Heart left ventricle (tissue), 16 donors: ENCODE measurements at regions of chr2 and their contacts with region 1.

Region 1: GRCh38 chr2:224802407-224802806 is 86.2 kb upstream of the CCDC195 start:
- DNase-seq: no peak
- ATAC-seq: peak in 2 of 4 donors; percentile 45 to 65
- H3K4me3 ChIP-seq: no peak overlapping the region
- H3K27ac ChIP-seq: no peak overlapping the region
- H3K4me1 ChIP-seq: no peaks in the 10 kb centered on the region
- H3K27me3 ChIP-seq: no peaks in the 10 kb centered on the region
- CTCF ChIP-seq: no peak
- POLR2A ChIP-seq: no peak

Region 2: GRCh38 chr2:224816816-224817215 is 14.4 kb after region 1 on chr2:
- intact Hi-C with region 1: loop called in 1 of 10 experiments (anchors 1 kb)
- DNase-seq: no peak
- ATAC-seq: no peak
- H3K4me3 ChIP-seq: no peak overlapping the region
- H3K27ac ChIP-seq: no peak overlapping the region
- H3K4me1 ChIP-seq: no peaks in the 10 kb centered on the region
- H3K27me3 ChIP-seq: no peaks in the 10 kb centered on the region
- CTCF ChIP-seq: no peak
- POLR2A ChIP-seq: no peak